ENCODE measurements at regions of chr1 and their contacts with region 1.

Region 1: DNA sequence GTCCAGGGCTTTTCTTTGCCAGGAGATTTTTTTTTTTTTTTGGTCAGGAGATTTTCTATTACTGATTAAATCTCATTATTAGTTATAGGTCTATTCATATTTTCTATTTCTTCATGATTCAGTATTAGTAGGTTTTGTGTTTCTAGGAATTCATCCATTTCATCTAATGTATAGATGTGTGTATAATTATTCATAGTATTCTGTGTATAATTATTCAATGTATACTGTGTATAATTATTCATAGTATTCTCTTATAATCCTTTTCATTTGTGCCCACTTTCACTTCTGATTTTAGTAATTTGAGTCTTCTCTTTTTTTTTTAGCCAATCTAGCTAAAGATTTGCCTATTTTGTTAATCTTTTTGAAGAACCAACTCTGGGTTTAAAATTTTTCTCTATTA is 12.3 kb upstream of the PNRC2 start:
- DNase-seq: no peak
- H3K4me3 ChIP-seq: no peak overlapping the region
- H3K27ac ChIP-seq: no peak overlapping the region
- H3K4me1 ChIP-seq: no peaks in the 10 kb centered on the region
- H3K27me3 ChIP-seq: no peaks in the 10 kb centered on the region
- CTCF ChIP-seq: no peak
- EP300 ChIP-seq: no peak
- POLR2A ChIP-seq: no peak
- RAD21 ChIP-seq: no peak

Region 2: DNA sequence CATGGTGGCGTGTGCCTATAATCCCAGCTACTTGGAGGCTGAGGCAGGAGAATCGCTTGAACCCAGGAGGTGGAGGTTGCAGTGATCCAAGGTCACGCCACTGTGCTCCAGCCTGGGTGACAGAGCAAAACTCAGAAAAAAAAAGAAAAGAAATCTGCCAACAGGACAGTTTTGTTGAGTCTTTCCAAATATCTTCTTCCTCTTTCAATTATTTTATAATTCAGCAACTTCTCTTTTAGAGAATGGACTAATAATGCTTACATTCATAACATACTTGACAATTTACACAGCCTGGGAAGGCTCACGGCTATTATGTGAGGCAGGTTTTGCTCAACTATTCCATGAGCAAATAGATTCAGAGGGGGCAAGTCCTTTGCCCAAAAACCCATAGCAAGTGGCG is 52.3 kb before region 1 on chr1:
- CTCF ChIA-PET with region 1: no interaction called
- POLR2A ChIA-PET with region 1: no interaction called
- DNase-seq: no peak
- H3K4me3 ChIP-seq: no peak overlapping the region
- H3K27ac ChIP-seq: no peak overlapping the region
- H3K4me1 ChIP-seq: 0 out of 7 replicates have a peak, but pooled peaks cover 0 to 2% (median 0%) of the 10 kb centered on the region in 4 experiments
- H3K27me3 ChIP-seq: no peaks in the 10 kb centered on the region
- CTCF ChIP-seq: no peak
- EP300 ChIP-seq: no peak
- POLR2A ChIP-seq: no peak
- RAD21 ChIP-seq: no peak

Region 3: GRCh38 chr1:23959041-23959460 is 11.7 kb after region 1 on chr1:
- CTCF ChIA-PET with region 1: interaction called, 10 read pairs
- POLR2A ChIA-PET with region 1: interaction called, 6 read pairs
- DNase-seq: peak in 1 of 2 experiments; percentile 39
- H3K4me3 ChIP-seq: peak overlapping the region; percentile 53 to 90 (median 84)
- H3K27ac ChIP-seq: peak overlapping the region; percentile 86
- H3K4me1 ChIP-seq: peaks cover 2 to 4% (median 3%) of the 10 kb centered on the region in 4 experiments; a peak in 6 of 7 replicates
- H3K27me3 ChIP-seq: no peaks in the 10 kb centered on the region
- CTCF ChIP-seq: no peak
- EP300 ChIP-seq: no peak
- POLR2A ChIP-seq: no peak
- RAD21 ChIP-seq: no peak

Region 4: GRCh38 chr1:24047101-24047459 is 99.7 kb after region 1 on chr1:
- CTCF ChIA-PET with region 1: no interaction called
- POLR2A ChIA-PET with region 1: no interaction called
- DNase-seq: no peak
- H3K4me3 ChIP-seq: no peak overlapping the region
- H3K27ac ChIP-seq: no peak overlapping the region
- H3K4me1 ChIP-seq: no peaks in the 10 kb centered on the region; a peak in 1 of 7 replicates
- H3K27me3 ChIP-seq: no peaks in the 10 kb centered on the region
- CTCF ChIP-seq: no peak
- EP300 ChIP-seq: no peak
- POLR2A ChIP-seq: no peak
- RAD21 ChIP-seq: no peak